HepG2 (cell line): ENCODE measurements at regions of chr14 and their contacts with region 1.

Region 1: GRCh38 chr14:73997108-73997943 is 21.8 kb downstream of the ENTPD5 start:
- DNase-seq: peak; percentile 71
- ATAC-seq: peak; percentile 87
- H3K4me3 ChIP-seq: peak overlapping the region; percentile 30 to 53 (median 46); a peak in 5 of 6 replicates
- H3K27ac ChIP-seq: peak overlapping the region; percentile 95
- H3K4me1 ChIP-seq: peaks cover 87% of the 10 kb centered on the region
- H3K27me3 ChIP-seq: no peaks in the 10 kb centered on the region
- CTCF ChIP-seq: no peak
- EP300 ChIP-seq: peak in 1 of 2 experiments; percentile 10; a peak in 2 of 4 replicates
- POLR2A ChIP-seq: peak; percentile 61 to 70
- RAD21 ChIP-seq: no peak

Region 2: DNA sequence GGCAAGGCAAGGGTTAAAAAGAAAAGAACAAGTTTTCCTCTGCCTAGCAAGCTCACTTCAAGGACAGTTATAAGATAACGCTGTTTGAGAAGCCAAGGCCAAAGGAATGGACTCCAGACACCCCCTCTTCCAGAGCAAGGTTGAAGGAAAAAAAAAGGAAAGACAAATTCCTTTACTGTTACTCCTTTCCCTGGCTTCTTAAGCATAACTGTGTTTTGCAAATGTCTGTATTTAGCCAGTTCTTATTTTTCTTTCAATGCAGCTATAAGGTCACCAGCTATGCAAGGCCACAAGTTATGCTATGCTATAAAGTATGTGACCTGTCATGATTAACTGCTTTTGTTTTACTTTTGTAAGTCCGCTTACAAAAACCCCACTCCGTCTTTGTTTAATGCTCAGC is 84.1 kb before region 1 on chr14:
- CTCF ChIA-PET with region 1: no interaction called
- POLR2A ChIA-PET with region 1: no interaction called
- in situ Hi-C with region 1: no loop called
- intact Hi-C with region 1: no loop called
- DNase-seq: no peak
- ATAC-seq: no peak
- H3K4me3 ChIP-seq: no peak overlapping the region
- H3K27ac ChIP-seq: no peak overlapping the region
- H3K4me1 ChIP-seq: no peaks in the 10 kb centered on the region
- H3K27me3 ChIP-seq: no peaks in the 10 kb centered on the region
- CTCF ChIP-seq: no peak
- EP300 ChIP-seq: no peak
- POLR2A ChIP-seq: no peak
- RAD21 ChIP-seq: no peak

Region 3: DNA sequence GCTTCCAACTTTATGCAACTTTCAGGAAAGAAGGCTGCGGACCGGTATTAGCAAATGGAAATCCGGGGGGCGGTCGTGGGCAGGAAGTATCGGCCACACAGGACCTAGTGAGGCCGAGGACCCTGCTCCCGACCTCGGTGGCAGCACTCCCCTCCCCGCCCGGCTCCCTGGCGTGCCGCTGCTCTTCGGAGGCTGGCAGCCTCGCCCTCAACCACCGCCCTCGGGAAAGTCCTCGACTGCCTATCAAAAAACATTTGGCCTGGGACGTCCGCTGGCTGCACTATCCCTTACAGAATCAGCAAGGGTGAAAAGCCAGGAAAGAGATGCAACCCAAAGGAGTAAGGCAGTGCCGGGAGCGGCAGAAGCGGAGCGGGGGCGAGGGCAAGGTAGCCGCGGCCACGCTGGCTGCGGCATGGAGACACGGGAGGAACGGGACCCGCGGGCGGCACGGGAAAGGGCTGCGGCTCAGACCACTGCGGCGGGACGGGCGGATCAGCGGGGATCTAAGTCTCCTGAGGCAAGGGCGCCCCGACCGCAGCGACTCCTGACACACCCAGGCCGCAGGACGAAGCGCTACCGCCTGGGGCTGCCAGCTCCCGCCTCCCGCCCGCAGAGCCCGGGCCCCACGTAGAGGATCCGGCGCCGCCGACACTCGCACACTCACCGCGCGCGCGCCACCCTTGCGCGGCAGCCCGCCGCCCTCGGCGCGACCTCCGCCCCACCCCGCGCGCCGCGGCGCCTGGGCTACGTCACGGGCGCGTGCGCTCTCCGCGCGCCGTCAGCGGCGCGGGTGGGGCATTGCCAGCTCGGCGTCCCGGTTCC is 21.5 kb after region 1 on chr14 and contains the starts of genes BBOF1 and ENTPD5:
- CTCF ChIA-PET with region 1: no interaction called
- POLR2A ChIA-PET with region 1: interaction called, 70 read pairs
- in situ Hi-C with region 1: no loop called
- intact Hi-C with region 1: loop called (anchors 1 kb)
- DNase-seq: peak; percentile 61
- ATAC-seq: peak; percentile 86
- H3K4me3 ChIP-seq: peak within 1 kb of the TSS; percentile 82 to 91 (median 89)
- H3K27ac ChIP-seq: peak within 1 kb of the TSS; percentile 96
- H3K4me1 ChIP-seq: peaks cover 70% of the 10 kb centered on the region
- H3K27me3 ChIP-seq: no peaks in the 10 kb centered on the region
- CTCF ChIP-seq: 0 out of 2 replicates have a peak, but pooled peaks have one; percentile 2
- EP300 ChIP-seq: no peak
- POLR2A ChIP-seq: peak; percentile 77 to 83; a peak in 3 of 4 replicates
- RAD21 ChIP-seq: no peak; the same call in none of the 2 replicates
- total RNA-seq, gene BBOF1: 2.3 and 2.4 TPM in 2 replicates
- total RNA-seq, gene ENTPD5: 20.6 and 33.8 TPM in 2 replicates

Region 4: DNA sequence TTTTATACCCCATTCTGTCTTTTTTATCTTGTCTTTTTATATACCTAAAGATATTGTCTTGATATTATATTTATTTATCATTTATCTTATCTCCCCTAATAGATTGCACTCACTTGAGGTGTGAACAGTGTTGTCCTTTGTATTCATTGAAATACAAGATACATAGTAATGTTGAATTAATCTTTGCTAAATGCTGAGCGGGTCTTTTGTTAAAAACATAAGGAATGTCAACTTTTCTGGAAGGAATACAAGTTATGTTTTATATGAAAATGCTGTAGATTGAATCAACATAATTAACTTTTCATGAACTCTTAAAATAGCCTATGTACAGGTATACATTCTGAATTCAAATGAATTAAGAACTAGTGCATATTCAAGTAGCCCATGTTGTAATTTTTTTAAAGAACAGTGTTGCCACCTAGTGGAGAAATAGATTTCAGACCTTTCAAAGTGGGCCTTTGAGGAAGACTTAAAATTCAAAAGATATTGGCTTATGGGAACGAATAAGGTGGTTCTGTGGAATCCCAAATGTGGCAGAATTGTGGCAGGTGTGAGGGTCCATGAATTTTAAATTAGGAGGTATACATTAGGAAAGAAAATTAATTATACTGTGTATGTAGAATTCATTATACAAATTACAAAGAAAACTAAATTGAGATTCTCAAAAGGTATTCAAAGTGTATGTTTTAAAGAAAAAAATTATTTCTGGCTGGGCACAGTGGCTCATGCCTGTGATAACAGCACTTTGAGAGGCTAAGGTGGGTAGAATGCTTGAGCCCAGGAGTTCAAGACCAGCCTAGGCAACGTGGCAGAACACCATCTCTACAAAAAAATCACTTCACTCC is 40.9 kb after region 1 on chr14:
- CTCF ChIA-PET with region 1: no interaction called
- POLR2A ChIA-PET with region 1: interaction called, 6 read pairs
- in situ Hi-C with region 1: no loop called
- intact Hi-C with region 1: loop called (anchors 5 kb)
- DNase-seq: peak; percentile 67
- ATAC-seq: peak; percentile 51
- H3K4me3 ChIP-seq: no peak overlapping the region
- H3K27ac ChIP-seq: no peak overlapping the region
- H3K4me1 ChIP-seq: no peaks in the 10 kb centered on the region
- H3K27me3 ChIP-seq: no peaks in the 10 kb centered on the region
- CTCF ChIP-seq: peak; percentile 70
- EP300 ChIP-seq: no peak
- POLR2A ChIP-seq: no peak
- RAD21 ChIP-seq: no peak

Region 5: DNA sequence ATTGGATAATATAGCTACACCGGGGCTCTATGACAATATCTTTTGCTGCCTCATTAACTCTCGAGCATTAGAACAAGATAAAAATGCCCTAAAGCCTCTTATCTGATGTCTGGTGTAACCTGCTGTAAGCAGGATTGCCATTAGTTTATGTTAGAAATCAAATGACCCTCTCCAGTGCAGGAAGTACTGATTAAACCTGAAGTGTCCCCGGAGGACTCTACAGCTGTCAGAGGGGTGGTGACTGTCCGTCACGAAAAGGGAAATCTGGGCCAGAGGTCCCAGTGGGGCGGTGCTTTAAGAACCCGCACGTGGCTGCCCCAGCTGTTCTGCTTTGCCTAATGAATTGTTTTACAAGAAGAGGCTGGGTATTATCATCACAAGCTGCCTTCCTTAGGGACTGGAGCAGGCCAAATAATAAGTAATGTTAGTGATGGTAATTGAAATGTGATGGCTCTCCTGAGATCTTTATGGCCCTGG is 143.1 kb after region 1 on chr14:
- CTCF ChIA-PET with region 1: no interaction called
- POLR2A ChIA-PET with region 1: no interaction called
- in situ Hi-C with region 1: no loop called
- intact Hi-C with region 1: no loop called
- DNase-seq: no peak
- ATAC-seq: no peak
- H3K4me3 ChIP-seq: no peak overlapping the region
- H3K27ac ChIP-seq: no peak overlapping the region
- H3K4me1 ChIP-seq: peaks cover 38% of the 10 kb centered on the region
- H3K27me3 ChIP-seq: no peaks in the 10 kb centered on the region
- CTCF ChIP-seq: no peak
- EP300 ChIP-seq: no peak
- POLR2A ChIP-seq: no peak
- RAD21 ChIP-seq: no peak